Right cardiac atrium (tissue), 5 donors: ENCODE measurements at regions of chr12 and their contacts with region 1.

Region 1: DNA sequence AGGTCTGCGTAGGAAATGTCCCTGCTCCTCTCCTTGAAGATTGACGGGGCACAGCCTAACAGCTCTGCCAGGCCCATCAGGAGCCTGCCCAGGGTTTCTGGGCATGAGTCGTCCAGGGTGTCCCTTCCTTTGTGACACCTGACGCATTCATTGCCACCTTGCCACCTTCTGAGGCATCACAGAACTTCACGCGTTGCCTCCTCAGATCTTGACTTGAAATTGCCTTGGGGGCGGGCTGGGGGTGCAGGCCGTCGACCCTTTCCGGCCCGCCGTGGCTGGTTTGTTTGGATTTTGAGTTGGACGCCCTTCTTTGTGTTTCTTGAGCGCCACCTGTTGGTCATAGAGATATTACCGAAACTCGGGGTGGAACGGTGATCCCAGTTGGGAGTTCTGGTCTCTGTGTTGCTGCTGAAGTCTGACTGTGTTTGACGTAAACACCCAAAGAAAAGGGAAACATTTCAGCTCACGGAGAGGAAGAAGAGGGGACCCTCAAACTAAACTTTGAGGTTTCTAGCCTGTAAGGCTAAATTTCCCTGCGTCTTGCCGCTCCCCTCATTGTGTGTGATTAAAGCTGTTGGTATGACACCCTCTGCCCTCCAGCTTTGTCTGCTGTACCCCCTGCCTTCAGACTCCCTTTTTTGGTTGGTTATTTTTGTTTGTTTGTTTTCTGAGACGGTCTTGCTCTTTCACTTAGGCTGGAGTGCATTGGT is 44.6 kb downstream of the MLXIP start:
- DNase-seq: peak in 2 of 3 donors; percentile 79 to 83
- ATAC-seq: peak; percentile 29 to 55
- H3K4me3 ChIP-seq: no peak overlapping the region
- H3K27ac ChIP-seq: no peak overlapping the region
- H3K4me1 ChIP-seq: peaks cover 5% of the 10 kb centered on the region
- H3K27me3 ChIP-seq: no peaks in the 10 kb centered on the region

Region 2: GRCh38 chr12:121917979-121918678 is 205.1 kb before region 1 on chr12 and contains the start of gene CFAP251:
- intact Hi-C with region 1: loop called in 1 of 4 experiments (anchors 10 kb)
- DNase-seq: peak; percentile 98 to 99 (median 99)
- ATAC-seq: peak; percentile 94 to 96
- H3K4me3 ChIP-seq: peak within 1 kb of the TSS; percentile 46
- H3K27ac ChIP-seq: no peak within 1 kb of the TSS
- H3K4me1 ChIP-seq: no peaks in the 10 kb centered on the region
- H3K27me3 ChIP-seq: no peaks in the 10 kb centered on the region
- total RNA-seq, gene CFAP251: 0.61 to 0.91 (median 0.75) TPM

Region 3: DNA sequence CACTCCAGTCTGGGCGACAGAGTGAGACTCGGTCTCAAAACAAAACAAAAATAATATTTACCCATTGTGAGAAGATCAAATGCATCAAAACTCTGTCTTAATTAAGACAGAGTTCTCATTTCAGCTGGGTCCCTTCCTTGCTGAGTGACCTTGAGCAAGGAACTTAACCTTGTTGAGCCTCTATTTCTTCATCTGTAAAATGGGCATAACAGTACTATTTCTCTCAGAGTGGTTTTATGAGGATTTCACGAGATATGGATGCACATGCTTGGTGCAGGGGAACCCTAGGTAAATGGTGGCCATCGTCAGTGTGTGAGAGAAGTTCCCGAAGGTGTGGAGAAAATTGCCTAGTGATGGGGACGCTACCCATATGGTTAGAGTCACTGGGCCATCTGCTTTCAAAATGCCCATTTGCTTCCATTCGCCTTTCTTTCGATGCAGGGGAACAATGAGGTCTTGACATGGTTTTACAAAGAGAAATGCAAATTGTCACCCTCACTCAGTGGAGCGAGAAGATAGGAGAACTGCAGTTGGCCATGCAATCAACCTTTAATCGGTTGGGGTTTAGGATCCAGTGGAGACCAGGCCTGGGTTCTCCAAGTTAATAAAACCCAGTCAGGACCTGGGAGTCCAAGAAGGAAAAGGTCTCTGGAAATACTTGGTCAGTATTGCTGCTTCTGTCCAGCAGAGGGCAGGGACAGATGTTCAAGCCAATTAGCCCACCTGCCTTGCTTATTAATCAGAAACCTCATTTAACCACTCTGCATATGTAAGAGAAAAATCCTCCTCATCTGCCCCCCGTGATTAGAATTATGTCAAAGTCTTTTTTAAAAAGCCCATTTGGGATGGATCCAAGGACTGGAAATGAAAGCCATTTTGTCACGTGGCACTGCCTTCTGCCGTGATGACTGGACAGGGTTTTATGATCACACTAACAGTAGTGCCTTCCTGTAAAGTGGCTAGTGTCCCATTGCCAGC is 167.7 kb before region 1 on chr12:
- intact Hi-C with region 1: loop called in 1 of 4 experiments (anchors 5 kb)
- DNase-seq: no peak
- ATAC-seq: peak in 1 of 2 donors; percentile 23
- H3K4me3 ChIP-seq: no peak overlapping the region
- H3K27ac ChIP-seq: no peak overlapping the region
- H3K4me1 ChIP-seq: no peaks in the 10 kb centered on the region
- H3K27me3 ChIP-seq: no peaks in the 10 kb centered on the region

Region 4: DNA sequence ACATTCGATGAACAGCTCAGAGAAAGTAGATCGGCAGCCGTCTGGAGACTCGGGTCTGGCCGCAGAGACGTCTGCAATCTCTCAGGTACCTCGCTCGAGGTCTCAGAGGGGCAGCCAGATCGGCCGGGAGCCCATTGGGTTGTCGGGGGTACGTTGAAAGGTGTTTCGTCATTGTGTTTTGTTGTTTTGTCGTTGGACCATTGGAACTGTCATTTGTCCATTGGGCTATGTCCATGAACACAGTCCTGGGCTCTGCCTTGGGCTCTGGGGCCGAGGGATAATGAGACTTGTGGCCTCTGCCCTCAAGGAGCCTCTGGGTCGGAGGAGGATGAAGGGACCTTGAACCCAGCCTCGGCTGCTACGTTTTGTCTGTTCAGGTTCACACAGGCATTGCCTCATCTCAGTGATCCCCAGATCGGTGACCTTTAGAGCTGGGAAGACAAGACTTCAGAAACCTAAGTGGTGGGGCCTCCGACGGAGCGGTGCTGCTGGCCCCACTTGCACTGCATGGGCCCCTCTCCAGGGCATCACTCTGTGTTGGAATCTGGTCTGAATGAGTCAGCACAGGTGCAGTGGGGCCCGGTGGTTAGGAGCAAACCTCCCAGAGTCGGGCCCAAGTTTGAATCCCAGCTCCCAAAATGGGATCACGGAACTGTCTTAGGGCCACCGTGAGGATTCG is 68.2 kb before region 1 on chr12:
- intact Hi-C with region 1: loop called (anchors 1 to 5 kb)
- DNase-seq: no peak
- ATAC-seq: no peak
- H3K4me3 ChIP-seq: no peak overlapping the region
- H3K27ac ChIP-seq: no peak overlapping the region
- H3K4me1 ChIP-seq: no peaks in the 10 kb centered on the region
- H3K27me3 ChIP-seq: no peaks in the 10 kb centered on the region